ENCODE measurements at regions of chr1 and their contacts with region 1.

Region 1: GRCh38 chr1:87314091-87314490 is 14.6 kb upstream of the LMO4 start:
- DNase-seq: no peak
- ATAC-seq: no peak
- H3K4me3 ChIP-seq: no peak overlapping the region
- H3K27ac ChIP-seq: no peak overlapping the region
- H3K4me1 ChIP-seq: peaks cover 0 to 10% (median 0%) of the 10 kb centered on the region in 12 donors
- H3K27me3 ChIP-seq: peaks cover 0 to 1% (median 0%) of the 10 kb centered on the region in 9 donors
- CTCF ChIP-seq: no peak
- POLR2A ChIP-seq: no peak

Region 2: DNA sequence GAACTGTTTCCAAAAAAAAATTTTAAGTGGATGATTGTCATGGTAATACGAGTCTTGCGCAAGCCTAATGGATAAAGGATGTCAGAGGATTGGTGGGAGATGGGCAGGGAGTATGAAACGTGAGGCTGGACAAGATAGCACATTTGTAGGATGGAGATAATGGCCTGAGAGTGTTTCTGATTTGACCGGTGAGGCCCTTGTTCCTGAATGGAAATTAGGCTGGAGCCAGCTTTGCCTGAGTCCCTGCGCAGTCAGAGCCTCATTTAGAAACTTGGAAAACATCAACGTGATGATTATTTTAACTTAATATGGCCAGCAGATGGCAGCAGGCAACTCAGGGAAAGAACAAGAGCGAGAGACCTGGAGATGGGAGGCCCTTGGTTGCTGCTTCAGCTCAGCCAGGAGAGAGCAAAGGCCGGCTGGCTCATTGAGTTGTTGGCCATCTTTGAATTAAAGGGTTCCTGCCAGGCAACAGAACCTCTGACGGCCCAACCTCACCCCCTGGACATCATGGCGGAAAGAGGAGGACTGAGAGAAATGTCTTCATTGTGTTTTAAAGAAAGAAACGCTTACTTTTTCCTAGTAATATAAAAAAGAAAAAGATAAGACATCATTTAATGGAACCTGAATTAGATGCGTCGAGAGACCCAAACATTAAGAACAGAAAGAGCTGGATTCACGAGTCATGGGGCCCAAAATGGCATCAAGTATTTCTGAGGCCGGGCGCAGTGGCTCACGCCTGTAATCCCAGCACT is 480.5 kb before region 1 on chr1:
- intact Hi-C with region 1: no loop called
- DNase-seq: peak; percentile 62 to 77 (median 64)
- ATAC-seq: peak; percentile 65 to 93 (median 88)
- H3K4me3 ChIP-seq: no peak overlapping the region
- H3K27ac ChIP-seq: no peak overlapping the region
- H3K4me1 ChIP-seq: peaks cover 0 to 8% (median 0%) of the 10 kb centered on the region in 12 donors
- H3K27me3 ChIP-seq: no peaks in the 10 kb centered on the region
- CTCF ChIP-seq: peak; percentile 51 to 75 (median 62)
- POLR2A ChIP-seq: no peak

Region 3: GRCh38 chr1:87058343-87058649 is 255.8 kb before region 1 on chr1:
- intact Hi-C with region 1: no loop called
- DNase-seq: no peak
- ATAC-seq: no peak
- H3K4me3 ChIP-seq: peak overlapping the region in 6 of 12 donors; percentile 17 to 49 (median 34)
- H3K27ac ChIP-seq: peak overlapping the region in 4 of 12 donors; percentile 11 to 32 (median 17)
- H3K4me1 ChIP-seq: peaks cover 0 to 18% (median 7%) of the 10 kb centered on the region in 12 donors
- H3K27me3 ChIP-seq: no peaks in the 10 kb centered on the region
- CTCF ChIP-seq: no peak
- POLR2A ChIP-seq: no peak

Region 4: GRCh38 chr1:87338566-87338965 is 24.5 kb after region 1 on chr1:
- intact Hi-C with region 1: no loop called
- DNase-seq: no peak
- ATAC-seq: no peak
- H3K4me3 ChIP-seq: no peak overlapping the region
- H3K27ac ChIP-seq: no peak overlapping the region
- H3K4me1 ChIP-seq: peaks cover 0 to 43% (median 22%) of the 10 kb centered on the region in 12 donors
- H3K27me3 ChIP-seq: no peaks in the 10 kb centered on the region
- CTCF ChIP-seq: no peak
- POLR2A ChIP-seq: no peak

Region 5: GRCh38 chr1:88061492-88062177 is 747.5 kb after region 1 on chr1:
- intact Hi-C with region 1: loop called in 1 of 10 experiments (anchors 5 kb)
- DNase-seq: peak in 3 of 5 donors; percentile 12 to 54 (median 41)
- ATAC-seq: peak in 3 of 4 donors; percentile 45 to 89 (median 81)
- H3K4me3 ChIP-seq: no peak overlapping the region
- H3K27ac ChIP-seq: no peak overlapping the region
- H3K4me1 ChIP-seq: peaks cover 0 to 5% (median 0%) of the 10 kb centered on the region in 12 donors
- H3K27me3 ChIP-seq: no peaks in the 10 kb centered on the region
- CTCF ChIP-seq: peak; percentile 30 to 71 (median 53)
- POLR2A ChIP-seq: no peak